SK-N-SH (cell line): ENCODE measurements at regions of chr14 and their contacts with region 1.

Region 1: DNA sequence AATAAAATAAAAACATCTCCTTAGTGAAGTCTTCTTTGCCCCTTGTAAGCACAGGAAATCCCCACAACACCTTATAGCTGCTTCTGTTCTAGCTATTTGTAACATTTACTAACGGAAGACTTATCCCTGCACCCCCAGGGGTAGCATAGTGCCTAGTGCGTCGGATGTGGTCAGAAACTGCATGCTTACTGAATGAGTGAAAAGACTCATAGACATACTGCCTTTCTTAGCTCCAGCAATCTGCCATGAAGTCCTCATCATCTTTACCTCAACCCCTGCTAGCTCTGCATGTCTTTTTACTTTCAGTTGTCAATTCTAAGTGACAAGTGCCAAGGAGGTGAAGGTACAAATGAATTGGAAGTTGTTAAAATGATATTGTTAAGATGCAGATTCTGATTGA is 12.9 kb downstream of the RIOX1 start:
- DNase-seq: no peak
- H3K4me3 ChIP-seq: no peak overlapping the region
- H3K27ac ChIP-seq: no peak overlapping the region
- H3K4me1 ChIP-seq: no peaks in the 10 kb centered on the region
- H3K27me3 ChIP-seq: no peaks in the 10 kb centered on the region
- CTCF ChIP-seq: no peak
- EP300 ChIP-seq: no peak
- RAD21 ChIP-seq: no peak

Region 2: DNA sequence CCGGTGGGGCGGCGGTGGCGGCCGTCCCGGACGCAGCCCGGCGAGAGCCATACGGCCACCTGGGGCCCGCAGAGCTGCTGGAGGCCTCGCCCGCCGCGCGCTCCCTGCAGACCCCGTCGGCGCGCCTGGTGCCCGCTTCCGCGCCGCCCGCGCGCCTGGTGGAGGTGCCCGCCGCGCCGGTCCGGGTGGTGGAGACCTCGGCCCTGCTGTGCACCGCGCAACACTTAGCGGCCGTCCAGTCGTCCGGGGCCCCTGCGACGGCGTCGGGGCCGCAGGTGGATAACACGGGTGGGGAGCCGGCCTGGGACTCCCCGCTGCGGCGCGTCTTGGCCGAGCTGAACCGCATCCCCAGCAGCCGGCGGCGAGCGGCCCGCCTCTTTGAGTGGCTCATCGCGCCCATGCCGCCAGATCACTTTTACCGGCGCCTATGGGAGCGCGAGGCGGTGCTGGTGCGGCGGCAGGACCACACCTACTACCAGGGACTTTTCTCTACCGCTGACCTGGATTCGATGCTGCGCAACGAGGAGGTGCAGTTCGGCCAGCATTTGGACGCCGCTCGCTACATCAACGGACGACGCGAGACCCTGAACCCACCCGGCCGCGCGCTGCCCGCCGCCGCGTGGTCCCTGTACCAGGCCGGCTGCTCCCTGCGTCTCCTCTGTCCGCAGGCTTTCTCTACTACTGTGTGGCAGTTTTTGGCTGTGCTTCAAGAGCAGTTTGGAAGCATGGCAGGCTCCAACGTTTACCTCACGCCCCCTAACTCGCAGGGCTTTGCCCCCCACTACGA is 12.2 kb before region 1 on chr14:
- CTCF ChIA-PET with region 1: interaction called, 38 read pairs
- POLR2A ChIA-PET with region 1: interaction called, 10 read pairs
- DNase-seq: peak; percentile 85
- H3K4me3 ChIP-seq: peak overlapping the region; percentile 64 to 69
- H3K27ac ChIP-seq: peak overlapping the region; percentile 66 to 88
- H3K4me1 ChIP-seq: peaks cover 4 to 16% of the 10 kb centered on the region in 2 experiments; a peak in 2 of 4 replicates
- H3K27me3 ChIP-seq: no peaks in the 10 kb centered on the region
- CTCF ChIP-seq: no peak
- EP300 ChIP-seq: no peak
- RAD21 ChIP-seq: no peak

Region 3: GRCh38 chr14:73526569-73526968 is 22.9 kb after region 1 on chr14:
- CTCF ChIA-PET with region 1: interaction called, 52 read pairs
- POLR2A ChIA-PET with region 1: no interaction called
- DNase-seq: peak; percentile 7
- H3K4me3 ChIP-seq: no peak overlapping the region
- H3K27ac ChIP-seq: no peak overlapping the region
- H3K4me1 ChIP-seq: peaks cover 0 to 8% of the 10 kb centered on the region in 2 experiments; a peak in 1 of 4 replicates
- H3K27me3 ChIP-seq: no peaks in the 10 kb centered on the region
- CTCF ChIP-seq: no peak
- EP300 ChIP-seq: no peak
- RAD21 ChIP-seq: no peak

Region 4: DNA sequence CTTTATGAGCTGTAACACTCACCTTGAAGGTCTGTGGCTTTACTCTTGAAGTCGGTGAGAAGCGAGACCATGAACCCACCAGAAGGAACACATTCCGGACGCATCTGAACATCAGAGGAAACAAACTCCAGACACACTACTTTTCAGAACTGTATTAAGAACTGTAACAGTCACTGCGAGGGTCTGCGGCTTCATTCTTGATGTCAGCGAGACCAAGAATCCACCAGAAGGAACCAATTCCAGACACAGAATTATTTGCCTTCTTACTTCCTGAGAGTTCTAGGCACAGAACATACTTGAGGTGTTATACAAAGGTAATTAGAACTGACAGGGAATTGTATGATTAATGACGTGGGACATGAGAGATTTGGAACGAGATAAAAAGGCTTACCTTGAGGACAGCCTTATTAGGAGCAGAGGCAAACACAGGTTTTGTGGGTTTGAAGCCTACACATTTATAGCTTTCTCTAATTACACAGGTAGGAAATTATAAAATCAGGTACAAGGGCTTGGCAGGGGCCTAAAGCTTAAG is 64.2 kb after region 1 on chr14:
- CTCF ChIA-PET with region 1: interaction called, 10 read pairs
- POLR2A ChIA-PET with region 1: no interaction called
- DNase-seq: no peak
- H3K4me3 ChIP-seq: no peak overlapping the region
- H3K27ac ChIP-seq: peak overlapping the region in 1 of 2 experiments; percentile 88; a peak in 1 of 4 replicates
- H3K4me1 ChIP-seq: peaks cover 5 to 12% of the 10 kb centered on the region in 2 experiments; a peak in 3 of 4 replicates
- H3K27me3 ChIP-seq: no peaks in the 10 kb centered on the region
- CTCF ChIP-seq: no peak
- EP300 ChIP-seq: no peak
- RAD21 ChIP-seq: no peak

Region 5: DNA sequence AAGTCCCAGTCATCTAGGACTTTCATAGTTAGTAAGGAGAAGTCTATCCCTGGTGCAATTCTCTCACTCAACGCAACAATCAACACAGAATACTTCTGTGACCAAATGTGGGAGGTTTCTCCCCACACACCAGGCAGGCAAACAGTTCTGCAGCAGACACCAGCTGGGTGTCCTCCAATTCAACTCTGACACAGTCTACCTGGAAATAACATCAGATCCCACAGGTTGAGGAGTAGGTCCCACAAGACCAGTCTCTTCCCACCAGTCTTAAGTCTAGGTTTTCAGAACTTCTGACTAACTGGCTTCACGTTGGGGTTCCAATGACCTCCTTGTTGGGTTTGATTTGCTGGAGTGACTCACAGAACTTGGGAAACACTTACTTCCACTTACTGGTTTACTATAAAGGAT is 123.5 kb after region 1 on chr14:
- CTCF ChIA-PET with region 1: interaction called, 73 read pairs
- POLR2A ChIA-PET with region 1: no interaction called
- DNase-seq: no peak
- H3K4me3 ChIP-seq: no peak overlapping the region
- H3K27ac ChIP-seq: no peak overlapping the region
- H3K4me1 ChIP-seq: no peaks in the 10 kb centered on the region
- H3K27me3 ChIP-seq: no peaks in the 10 kb centered on the region
- CTCF ChIP-seq: no peak
- EP300 ChIP-seq: no peak
- RAD21 ChIP-seq: no peak

Region 6: DNA sequence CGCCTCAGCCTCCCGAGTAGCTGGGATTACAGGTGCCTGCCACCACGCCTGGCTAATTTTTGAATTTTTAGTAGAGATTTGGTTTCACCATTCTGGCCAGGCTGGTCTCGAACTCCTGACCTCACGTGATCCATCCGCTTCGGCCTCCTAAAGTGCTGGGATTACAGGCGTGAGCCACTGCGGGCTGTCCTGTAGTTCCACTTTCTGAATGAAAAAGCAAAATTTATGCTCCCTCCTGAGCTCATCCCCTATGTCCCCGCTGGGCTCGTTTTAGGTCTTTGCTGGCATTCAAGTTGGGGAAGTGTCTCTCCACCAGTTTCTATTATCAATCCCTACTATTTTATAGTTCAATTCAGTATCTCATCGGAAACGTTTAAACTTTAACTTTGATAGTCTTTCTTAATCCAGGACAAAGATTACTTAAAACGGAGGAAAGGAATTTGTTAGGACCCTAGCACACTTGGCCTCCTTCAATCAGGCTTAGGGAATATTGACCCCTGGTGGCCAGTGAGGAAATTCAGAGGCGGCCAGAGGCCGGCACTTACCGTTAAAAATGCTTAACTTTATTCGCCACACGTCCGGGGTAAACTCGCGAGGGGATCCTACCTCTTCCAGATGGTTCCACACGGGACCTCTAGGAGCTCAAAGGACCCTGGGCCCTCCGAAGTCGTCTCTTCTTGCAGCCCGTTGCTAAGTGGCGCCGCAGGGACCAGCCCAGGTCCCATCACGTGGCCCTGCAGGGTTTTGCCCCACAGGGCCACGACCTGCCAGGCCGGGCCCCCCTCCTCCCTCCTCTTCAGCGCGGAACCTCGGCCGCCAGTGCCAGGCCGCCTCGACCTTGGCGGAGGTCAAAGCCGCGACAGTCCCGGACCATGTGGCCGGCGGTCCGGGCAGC is 129.7 kb after region 1 on chr14:
- CTCF ChIA-PET with region 1: interaction called, 73 read pairs
- POLR2A ChIA-PET with region 1: no interaction called
- DNase-seq: peak; percentile 82
- H3K4me3 ChIP-seq: peak overlapping the region in 1 of 2 experiments; percentile 25; a peak in 2 of 4 replicates
- H3K27ac ChIP-seq: no peak overlapping the region
- H3K4me1 ChIP-seq: no peaks in the 10 kb centered on the region
- H3K27me3 ChIP-seq: no peaks in the 10 kb centered on the region
- CTCF ChIP-seq: peak; percentile 93
- EP300 ChIP-seq: no peak
- RAD21 ChIP-seq: peak; percentile 89